Spleen (tissue), 13 donors: ENCODE measurements at regions of chr16 and their contacts with region 1.

Region 1: DNA sequence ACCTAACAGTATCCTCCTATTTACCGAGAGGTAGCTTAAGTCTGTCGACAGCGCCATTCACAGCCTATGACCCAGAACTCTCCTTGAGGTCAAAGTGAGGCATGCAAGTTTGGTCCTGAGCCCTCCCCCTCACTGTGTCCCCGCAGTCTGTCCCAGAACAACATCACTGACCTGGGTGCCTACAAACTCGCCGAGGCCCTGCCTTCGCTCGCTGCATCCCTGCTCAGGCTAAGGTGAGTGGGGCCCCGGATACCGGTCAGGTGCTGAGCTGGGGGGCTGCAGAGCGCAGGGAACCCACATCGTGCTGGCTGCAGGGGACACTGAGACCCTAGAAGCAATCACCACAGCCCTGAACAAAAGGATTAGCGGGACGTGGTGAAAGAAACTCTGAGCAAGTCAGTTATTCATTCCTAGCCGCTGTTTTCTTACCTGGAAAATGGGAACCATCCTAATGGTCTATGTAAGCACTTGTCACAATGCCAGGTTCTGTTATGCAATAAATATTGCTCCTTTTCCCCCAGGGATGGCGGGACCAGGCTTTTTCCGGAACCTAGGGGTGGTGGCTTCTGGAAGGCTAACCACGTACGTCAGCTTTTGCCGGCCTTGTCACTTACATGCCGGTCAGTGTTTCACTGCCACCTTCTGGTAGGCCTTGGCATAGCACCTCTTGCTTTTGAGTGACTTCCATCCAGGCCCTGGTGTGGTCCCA is 23.8 kb downstream of the DEXI start:
- DNase-seq: peak; percentile 92
- H3K4me3 ChIP-seq: peak overlapping the region in 2 of 8 donors; percentile 3 to 36
- H3K27ac ChIP-seq: peak overlapping the region in 6 of 8 donors; percentile 22 to 78 (median 50)
- H3K4me1 ChIP-seq: peaks cover 18 to 85% (median 49%) of the 10 kb centered on the region in 6 donors
- H3K27me3 ChIP-seq: no peaks in the 10 kb centered on the region
- CTCF ChIP-seq: peak; percentile 87 to 97 (median 95)
- POLR2A ChIP-seq: no peak

Region 2: DNA sequence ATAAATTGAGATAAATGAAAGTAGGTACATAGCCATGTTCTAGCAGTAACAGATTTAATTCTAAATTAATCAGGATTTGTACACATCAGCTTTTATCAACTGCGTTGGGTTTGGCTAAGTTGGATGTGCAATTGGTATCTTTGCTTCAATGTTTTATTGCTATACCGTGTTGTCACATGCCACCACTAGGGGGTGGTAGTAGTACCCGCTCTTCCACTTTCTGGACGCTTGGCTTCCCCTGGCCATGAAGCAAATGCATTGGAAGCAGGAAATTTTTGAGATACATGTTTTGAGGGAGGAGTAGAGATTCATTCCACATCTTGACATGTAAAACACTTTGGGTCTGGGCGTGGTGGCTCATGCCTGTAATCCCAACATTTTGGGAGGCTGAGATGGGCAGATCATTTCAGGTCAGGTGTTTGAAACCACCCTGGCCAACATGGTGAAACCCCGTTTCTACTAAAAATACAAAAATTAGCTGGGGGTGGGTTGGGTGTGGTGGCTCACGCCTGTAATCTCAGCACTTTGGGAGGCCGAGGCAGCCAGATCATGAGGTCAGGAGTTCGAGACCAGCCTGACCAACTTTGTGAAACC is 396.7 kb before region 1 on chr16:
- intact Hi-C with region 1: loop called (anchors 10 kb)
- DNase-seq: no peak
- H3K4me3 ChIP-seq: no peak overlapping the region
- H3K27ac ChIP-seq: no peak overlapping the region
- H3K4me1 ChIP-seq: peaks cover 0 to 7% (median 0%) of the 10 kb centered on the region in 6 donors
- H3K27me3 ChIP-seq: no peaks in the 10 kb centered on the region
- CTCF ChIP-seq: peak; percentile 49 to 83 (median 70)
- POLR2A ChIP-seq: no peak

Region 3: DNA sequence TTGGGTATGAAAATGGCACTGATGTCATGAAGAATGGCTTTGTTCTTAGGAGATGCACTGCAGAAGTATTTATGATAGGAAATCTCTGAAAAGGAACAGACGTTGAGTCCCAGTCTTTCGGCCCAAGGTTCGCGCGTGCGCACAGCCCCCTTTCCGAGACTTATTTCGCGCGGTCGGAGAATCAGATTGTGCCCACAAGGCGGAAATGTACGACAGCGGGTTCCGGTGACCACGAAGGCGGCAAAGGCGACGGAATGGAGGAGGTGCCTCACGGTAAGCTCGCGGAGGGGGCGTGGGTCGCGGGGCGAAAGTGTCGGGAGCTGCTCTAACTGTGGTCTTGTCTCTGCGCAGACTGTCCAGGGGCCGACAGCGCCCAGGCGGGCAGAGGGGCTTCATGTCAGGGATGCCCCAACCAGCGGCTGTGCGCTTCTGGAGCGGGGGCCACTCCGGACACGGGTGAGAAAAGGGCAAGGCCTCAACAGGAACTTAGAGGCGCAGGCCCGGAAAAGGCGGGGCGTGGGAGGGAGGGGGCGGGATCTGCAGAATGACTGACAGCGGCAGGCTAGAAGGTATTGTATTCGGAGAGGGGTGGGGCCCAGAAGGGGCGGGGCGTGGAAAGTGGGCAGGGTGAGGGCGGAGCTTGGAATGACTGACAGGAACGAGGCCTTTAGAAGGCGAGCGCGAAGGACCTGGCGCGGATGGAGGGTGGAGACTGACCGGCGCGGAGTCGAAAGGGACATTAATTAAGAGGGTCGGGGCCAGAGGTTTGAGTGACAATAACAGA is 174.6 kb before region 1 on chr16 and contains the start of gene NUBP1:
- intact Hi-C with region 1: loop called (anchors 10 kb)
- DNase-seq: peak; percentile 99
- H3K4me3 ChIP-seq: peak within 1 kb of the TSS; percentile 40 to 74 (median 53)
- H3K27ac ChIP-seq: peak within 1 kb of the TSS; percentile 93 to 98 (median 97)
- H3K4me1 ChIP-seq: peaks cover 17 to 72% (median 34%) of the 10 kb centered on the region in 6 donors
- H3K27me3 ChIP-seq: no peaks in the 10 kb centered on the region
- CTCF ChIP-seq: peak in 3 of 11 experiments; percentile 5 to 40 (median 16)
- POLR2A ChIP-seq: peak; percentile 21 to 49 (median 45)
- total RNA-seq, gene NUBP1: 22.8 to 47.5 (median 32.8) TPM